ENCODE measurements at regions of chr5 and their contacts with region 1.

Region 1: DNA sequence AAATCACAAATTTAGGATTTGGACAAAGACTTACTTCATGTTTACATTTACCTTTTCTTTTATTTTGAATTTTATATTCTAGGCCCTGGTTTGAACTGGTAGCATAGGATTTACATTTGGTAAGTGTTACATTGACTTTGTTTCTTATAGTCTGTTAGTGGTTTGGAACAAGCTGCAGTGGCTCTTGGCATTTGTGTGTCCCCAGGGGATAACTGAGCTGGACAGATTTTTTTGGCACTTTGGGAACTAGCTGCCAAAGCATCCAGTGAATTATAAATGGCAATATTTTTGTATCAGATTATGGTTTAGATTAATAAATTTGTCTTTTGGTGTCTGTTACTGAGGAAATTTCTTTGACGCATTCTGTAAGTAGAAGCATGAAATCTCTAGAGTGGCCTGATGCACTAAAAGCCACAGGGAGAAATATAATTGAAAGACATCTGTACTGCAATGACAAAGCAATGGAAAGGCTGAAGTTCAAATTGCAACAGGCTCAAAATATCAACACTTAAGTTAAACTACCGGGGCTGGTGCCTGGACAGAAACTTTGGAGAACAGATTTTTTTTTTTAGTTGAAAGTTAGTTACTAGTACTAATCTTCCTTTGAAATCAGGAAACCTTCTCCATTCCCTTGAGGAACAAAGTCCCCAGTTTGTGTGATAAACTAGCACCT is 107.6 kb upstream of the PLCXD3 start:
- DNase-seq: no peak
- H3K4me3 ChIP-seq: no peak overlapping the region
- H3K27ac ChIP-seq: no peak overlapping the region
- H3K27me3 ChIP-seq: peaks cover 0 to 5% (median 0%) of the 10 kb centered on the region in 45 donors
- CTCF ChIP-seq: no peak

Region 2: DNA sequence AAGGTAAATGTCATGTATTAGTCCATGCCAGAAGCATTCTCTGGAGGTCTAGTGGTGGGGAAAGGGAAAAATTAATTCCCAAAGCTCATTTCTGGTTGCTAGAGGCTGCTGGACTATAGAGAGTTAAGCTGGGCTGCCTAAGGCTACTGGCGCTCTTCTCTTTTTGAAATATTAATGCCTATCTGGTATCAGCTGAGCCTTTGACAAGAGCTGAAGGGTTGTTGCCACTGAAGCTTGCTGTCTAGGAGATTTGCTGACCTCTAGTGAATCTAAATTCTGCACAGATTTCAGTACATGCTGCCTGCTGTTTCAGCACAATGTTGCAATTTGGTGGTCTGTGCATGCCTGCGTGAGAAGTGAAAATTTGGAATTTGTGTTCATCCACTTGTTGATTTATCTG is 78.5 kb before region 1 on chr5:
- intact Hi-C with region 1: no loop called
- DNase-seq: no peak
- H3K4me3 ChIP-seq: no peak overlapping the region
- H3K27ac ChIP-seq: no peak overlapping the region
- H3K27me3 ChIP-seq: peaks cover 0 to 4% (median 0%) of the 10 kb centered on the region in 45 donors
- CTCF ChIP-seq: no peak

Region 3: DNA sequence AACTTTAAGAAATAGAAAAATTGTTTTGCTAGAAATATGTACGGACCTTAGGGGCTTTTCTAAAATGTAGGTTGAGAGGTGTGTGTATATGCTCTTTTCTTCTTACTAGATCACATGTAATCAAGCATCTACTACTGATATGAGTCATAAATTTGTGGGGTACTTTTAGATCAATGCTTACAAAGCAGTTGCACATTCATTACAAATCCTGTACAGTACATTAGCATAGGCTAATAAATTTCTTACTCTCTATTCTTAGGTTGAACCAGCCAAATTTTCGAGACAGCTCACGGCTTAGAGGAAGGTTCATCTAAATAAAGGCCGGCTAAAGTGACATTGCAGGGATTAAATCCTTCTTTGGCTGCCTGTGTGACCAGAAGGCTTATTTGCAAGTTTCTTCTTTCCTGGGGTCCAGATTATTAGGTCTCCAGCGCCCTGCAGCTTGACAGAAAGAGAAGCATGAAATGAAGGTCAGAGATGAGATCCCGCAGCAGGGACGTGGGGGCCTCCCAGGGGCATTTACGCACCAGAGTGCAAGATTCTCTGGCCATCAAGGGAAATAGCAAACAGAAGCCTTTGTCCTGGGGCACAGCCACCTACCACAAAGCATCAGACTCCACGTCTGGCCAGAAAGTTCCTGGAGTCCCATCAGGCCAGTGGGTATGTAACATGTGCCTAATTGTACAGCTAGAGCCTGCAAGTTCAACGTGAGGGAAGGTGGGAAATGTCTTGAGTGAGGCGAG is 1627.0 kb after region 1 on chr5:
- intact Hi-C with region 1: loop called in 1 of 2 experiments (anchors 5 kb)
- DNase-seq: no peak
- H3K4me3 ChIP-seq: no peak overlapping the region
- H3K27ac ChIP-seq: no peak overlapping the region
- H3K27me3 ChIP-seq: no peaks in the 10 kb centered on the region
- CTCF ChIP-seq: no peak